CD8-positive, alpha-beta T cell (primary cell): ENCODE measurements at regions of chr5 and their contacts with region 1.

Region 1: DNA sequence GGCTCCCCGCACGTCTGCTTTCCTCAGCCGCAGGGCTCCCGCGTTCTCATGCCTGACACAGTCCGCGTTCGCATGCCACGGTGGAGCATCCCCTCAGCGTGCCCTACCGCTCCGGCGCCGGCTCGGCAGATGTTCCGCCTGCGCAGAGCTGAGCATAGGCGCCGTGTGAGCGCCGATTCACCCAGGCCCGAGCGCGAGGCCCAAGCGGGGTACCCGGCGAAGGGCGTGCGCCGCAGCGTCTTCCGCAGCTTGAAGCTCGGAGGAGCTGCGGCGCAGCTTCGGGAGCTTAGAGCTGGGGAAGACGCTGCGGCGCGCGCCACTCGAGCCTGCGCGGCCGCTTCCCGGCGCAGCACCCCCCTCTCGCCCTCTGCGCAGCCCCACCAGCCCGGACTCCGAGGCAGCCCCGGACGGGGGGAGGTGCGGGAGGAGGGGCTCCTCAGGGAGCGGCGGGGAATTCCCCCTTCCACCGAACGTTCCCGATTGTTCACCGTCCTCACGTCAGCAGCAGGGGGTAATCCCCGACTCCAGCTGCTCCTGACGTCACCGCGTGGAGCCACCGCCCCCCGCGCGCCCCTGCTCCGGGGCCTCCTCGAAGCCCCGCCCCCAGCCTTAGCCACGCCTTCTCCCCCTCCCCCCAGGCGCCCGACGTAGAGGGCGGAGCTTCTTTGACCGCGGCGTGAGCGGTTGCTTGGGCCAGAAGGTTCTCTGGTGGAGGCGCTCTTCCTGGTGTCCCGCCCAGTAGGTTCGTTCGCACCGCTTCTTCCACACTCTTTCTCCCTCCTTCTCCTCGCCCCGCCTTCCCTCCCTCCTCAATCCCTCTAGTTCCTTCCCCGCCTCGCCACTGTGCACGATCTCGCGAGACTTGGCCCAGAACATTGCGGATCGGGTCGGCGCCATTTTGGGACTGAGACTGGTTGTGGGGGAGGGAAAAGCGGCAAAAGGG is at the start of gene GPBP1:
- DNase-seq: peak; percentile 95 to 100 (median 98)
- ATAC-seq: peak; percentile 74
- H3K4me3 ChIP-seq: peak within 1 kb of the TSS; percentile 87 to 100
- H3K4me3 Mint-ChIP-seq: peak within 1 kb of the TSS; percentile 96
- H3K27ac ChIP-seq: peak within 1 kb of the TSS; percentile 91 to 98
- H3K27ac Mint-ChIP-seq: peak within 1 kb of the TSS; percentile 98
- H3K4me1 ChIP-seq: peaks cover 18% of the 10 kb centered on the region
- H3K4me1 Mint-ChIP-seq: peaks cover 38% of the 10 kb centered on the region
- H3K27me3 ChIP-seq: no peaks in the 10 kb centered on the region
- H3K27me3 Mint-ChIP-seq: no peaks in the 10 kb centered on the region
- CTCF ChIP-seq: no peak
- total RNA-seq, gene GPBP1: 164 to 165 TPM

Region 2: DNA sequence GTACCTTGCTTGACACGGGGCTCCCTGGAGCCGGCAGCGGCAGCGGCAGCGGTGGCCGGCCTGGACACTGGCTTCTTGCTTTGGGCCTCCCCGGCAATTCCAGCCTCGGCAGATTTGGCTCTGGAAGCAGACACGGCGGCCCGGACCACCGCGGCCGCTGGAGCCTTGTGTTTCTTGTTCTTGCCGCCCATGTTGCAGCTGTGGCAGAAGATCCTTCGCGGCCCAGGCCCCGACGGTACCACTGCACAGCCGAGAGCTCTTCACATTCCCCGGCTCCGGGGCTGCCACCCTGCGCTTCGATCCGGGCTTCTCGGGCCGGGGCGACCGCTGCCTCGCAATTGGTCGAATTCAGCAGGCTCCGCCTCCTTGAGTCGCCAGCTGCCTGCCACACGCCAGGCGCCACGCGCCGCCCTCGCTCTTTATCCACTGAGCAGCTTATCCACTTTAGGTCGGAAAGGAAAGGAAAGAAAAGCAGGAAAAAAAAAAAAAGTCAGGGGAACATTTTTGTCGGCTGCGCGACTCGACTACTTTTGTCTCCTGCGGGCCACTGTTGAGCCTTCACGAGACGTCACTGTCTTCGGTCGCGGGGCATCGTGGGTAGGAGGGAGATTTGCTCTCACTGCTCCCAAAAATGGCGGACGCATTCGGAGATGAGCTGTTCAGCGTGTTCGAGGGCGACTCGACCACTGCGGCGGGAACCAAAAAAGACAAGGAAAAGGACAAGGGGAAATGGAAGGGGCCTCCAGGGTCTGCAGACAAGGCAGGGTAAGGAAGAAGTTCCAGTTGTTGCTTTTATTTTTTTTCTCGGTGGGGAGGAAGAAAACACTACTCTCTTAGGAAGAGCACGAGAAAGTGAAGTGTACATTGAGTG is 1865.8 kb before region 1 on chr5 and contains the starts of genes DHX29 and MTREX:
- CTCF ChIA-PET with region 1: no interaction called
- POLR2A ChIA-PET with region 1: no interaction called
- intact Hi-C with region 1: loop called in 1 of 2 experiments (anchors 5 kb)
- DNase-seq: peak; percentile 76 to 93 (median 87)
- ATAC-seq: peak; percentile 90
- H3K4me3 ChIP-seq: peak within 1 kb of the TSS; percentile 72 to 76
- H3K4me3 Mint-ChIP-seq: no peak within 1 kb of the TSS
- H3K27ac ChIP-seq: peak within 1 kb of the TSS; percentile 86 to 90
- H3K27ac Mint-ChIP-seq: no peak within 1 kb of the TSS
- H3K4me1 ChIP-seq: peaks cover 41% of the 10 kb centered on the region
- H3K4me1 Mint-ChIP-seq: peaks cover 38% of the 10 kb centered on the region
- H3K27me3 ChIP-seq: no peaks in the 10 kb centered on the region
- H3K27me3 Mint-ChIP-seq: no peaks in the 10 kb centered on the region
- CTCF ChIP-seq: no peak
- total RNA-seq, gene DHX29: 15.4 to 19.9 TPM
- total RNA-seq, gene MTREX: 62.8 to 66.5 TPM

Region 3: GRCh38 chr5:56909294-56910209 is 263.9 kb before region 1 on chr5 and contains the start of gene SETD9:
- CTCF ChIA-PET with region 1: interaction called, 3 read pairs
- POLR2A ChIA-PET with region 1: interaction called, 18 read pairs
- intact Hi-C with region 1: loop called (anchors 1 kb)
- DNase-seq: peak; percentile 67 to 94 (median 87)
- ATAC-seq: peak; percentile 82
- H3K4me3 ChIP-seq: peak within 1 kb of the TSS; percentile 88
- H3K4me3 Mint-ChIP-seq: peak within 1 kb of the TSS; percentile 89
- H3K27ac ChIP-seq: peak within 1 kb of the TSS; percentile 61 to 87
- H3K27ac Mint-ChIP-seq: peak within 1 kb of the TSS; percentile 88
- H3K4me1 ChIP-seq: peaks cover 8% of the 10 kb centered on the region
- H3K4me1 Mint-ChIP-seq: peaks cover 20% of the 10 kb centered on the region
- H3K27me3 ChIP-seq: no peaks in the 10 kb centered on the region
- H3K27me3 Mint-ChIP-seq: no peaks in the 10 kb centered on the region
- CTCF ChIP-seq: no peak
- total RNA-seq, gene SETD9: 2.5 to 2.9 TPM

Region 4: DNA sequence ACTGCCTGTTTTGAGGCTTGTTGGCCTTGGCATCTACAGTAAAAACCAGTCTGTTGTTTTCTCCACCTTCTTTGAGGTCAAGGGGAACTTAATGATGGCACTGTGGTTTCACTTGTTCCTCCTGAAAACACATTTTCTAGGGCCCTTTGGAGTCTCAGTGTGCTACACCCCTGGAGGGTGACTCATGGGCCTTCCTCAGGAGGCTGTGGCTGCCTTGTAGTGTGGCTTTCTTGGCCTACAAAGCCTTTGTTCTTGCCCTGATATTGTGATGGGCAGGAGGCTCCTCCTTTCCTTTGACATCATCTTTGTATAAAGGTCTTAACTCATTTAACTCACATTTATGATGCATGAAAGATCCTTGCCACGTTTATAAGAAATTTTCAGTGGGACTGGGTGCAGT is 55.9 kb before region 1 on chr5:
- CTCF ChIA-PET with region 1: no interaction called
- POLR2A ChIA-PET with region 1: no interaction called
- intact Hi-C with region 1: loop called in 1 of 2 experiments (anchors 1 kb)
- DNase-seq: peak; percentile 12 to 80 (median 68)
- ATAC-seq: peak; percentile 97
- H3K4me3 ChIP-seq: no peak overlapping the region
- H3K4me3 Mint-ChIP-seq: no peak overlapping the region
- H3K27ac ChIP-seq: no peak overlapping the region
- H3K27ac Mint-ChIP-seq: peak overlapping the region; percentile 52
- H3K4me1 ChIP-seq: peaks cover 7% of the 10 kb centered on the region
- H3K4me1 Mint-ChIP-seq: peaks cover 10% of the 10 kb centered on the region
- H3K27me3 ChIP-seq: no peaks in the 10 kb centered on the region
- H3K27me3 Mint-ChIP-seq: no peaks in the 10 kb centered on the region
- CTCF ChIP-seq: no peak

Region 5: GRCh38 chr5:57193757-57194413 is 20.4 kb after region 1 on chr5:
- CTCF ChIA-PET with region 1: interaction called, 3 read pairs
- POLR2A ChIA-PET with region 1: interaction called, 3 read pairs
- intact Hi-C with region 1: loop called (anchors 2 kb)
- DNase-seq: peak in 2 of 9 experiments; percentile 35 to 60
- ATAC-seq: peak; percentile 80
- H3K4me3 ChIP-seq: no peak overlapping the region
- H3K4me3 Mint-ChIP-seq: peak overlapping the region; percentile 40
- H3K27ac ChIP-seq: peak overlapping the region in 1 of 2 experiments; percentile 36
- H3K27ac Mint-ChIP-seq: peak overlapping the region; percentile 34
- H3K4me1 ChIP-seq: peaks cover 58% of the 10 kb centered on the region
- H3K4me1 Mint-ChIP-seq: peaks cover 77% of the 10 kb centered on the region
- H3K27me3 ChIP-seq: no peaks in the 10 kb centered on the region
- H3K27me3 Mint-ChIP-seq: no peaks in the 10 kb centered on the region
- CTCF ChIP-seq: no peak

Region 6: DNA sequence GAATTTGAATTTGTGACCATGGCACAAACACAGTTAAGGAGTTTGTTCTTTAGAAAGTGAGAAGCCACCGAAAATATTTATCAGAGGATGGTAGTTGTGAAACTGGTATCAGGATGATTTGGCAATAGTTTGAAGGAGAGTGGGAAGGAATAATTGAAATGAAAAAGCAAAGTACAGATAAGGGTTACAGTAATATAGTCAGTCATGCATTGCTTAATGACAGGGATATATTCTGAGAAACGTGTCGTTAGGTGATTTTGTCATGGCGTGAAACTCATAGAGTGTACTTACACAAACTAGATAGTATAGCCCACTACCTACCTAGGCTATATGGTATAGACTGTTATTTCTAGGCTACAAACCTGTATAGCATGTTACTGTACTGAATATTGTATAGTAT is 84.6 kb after region 1 on chr5:
- CTCF ChIA-PET with region 1: no interaction called
- POLR2A ChIA-PET with region 1: no interaction called
- intact Hi-C with region 1: loop called in 1 of 2 experiments (anchors 2 kb)
- DNase-seq: no peak
- ATAC-seq: no peak
- H3K4me3 ChIP-seq: no peak overlapping the region
- H3K4me3 Mint-ChIP-seq: no peak overlapping the region
- H3K27ac ChIP-seq: no peak overlapping the region
- H3K27ac Mint-ChIP-seq: no peak overlapping the region
- H3K4me1 ChIP-seq: no peaks in the 10 kb centered on the region
- H3K4me1 Mint-ChIP-seq: peaks cover 15% of the 10 kb centered on the region
- H3K27me3 ChIP-seq: no peaks in the 10 kb centered on the region
- H3K27me3 Mint-ChIP-seq: no peaks in the 10 kb centered on the region
- CTCF ChIP-seq: no peak